T-cell (primary cell): ENCODE measurements at regions of chr12 and their contacts with region 1.

Region 1: GRCh38 chr12:42372154-42372791 is 46.3 kb downstream of the PPHLN1 start:
- DNase-seq: peak in 9 of 35 experiments; percentile 6 to 73 (median 14)
- ATAC-seq: peak; percentile 75 to 89 (median 80)
- H3K4me3 ChIP-seq: no peak overlapping the region
- H3K4me3 Mint-ChIP-seq: no peak overlapping the region
- H3K27ac ChIP-seq: no peak overlapping the region
- H3K27ac Mint-ChIP-seq: no peak overlapping the region
- H3K4me1 ChIP-seq: no peaks in the 10 kb centered on the region
- H3K4me1 Mint-ChIP-seq: peaks cover 6 to 26% (median 13%) of the 10 kb centered on the region in 3 donors
- H3K27me3 ChIP-seq: no peaks in the 10 kb centered on the region
- H3K27me3 Mint-ChIP-seq: no peaks in the 10 kb centered on the region

Region 2: GRCh38 chr12:40946612-40947194 is 1425.6 kb before region 1 on chr12:
- CTCF ChIA-PET with region 1: interaction called, 5 to 21 read pairs
- POLR2A ChIA-PET with region 1: no interaction called
- DNase-seq: peak in 1 of 35 experiments; percentile 42
- ATAC-seq: no peak
- H3K4me3 ChIP-seq: no peak overlapping the region
- H3K4me3 Mint-ChIP-seq: no peak overlapping the region
- H3K27ac ChIP-seq: no peak overlapping the region
- H3K27ac Mint-ChIP-seq: no peak overlapping the region
- H3K4me1 ChIP-seq: no peaks in the 10 kb centered on the region
- H3K4me1 Mint-ChIP-seq: no peaks in the 10 kb centered on the region
- H3K27me3 ChIP-seq: no peaks in the 10 kb centered on the region
- H3K27me3 Mint-ChIP-seq: peaks cover 0 to 3% of the 10 kb centered on the region in 2 donors

Region 3: DNA sequence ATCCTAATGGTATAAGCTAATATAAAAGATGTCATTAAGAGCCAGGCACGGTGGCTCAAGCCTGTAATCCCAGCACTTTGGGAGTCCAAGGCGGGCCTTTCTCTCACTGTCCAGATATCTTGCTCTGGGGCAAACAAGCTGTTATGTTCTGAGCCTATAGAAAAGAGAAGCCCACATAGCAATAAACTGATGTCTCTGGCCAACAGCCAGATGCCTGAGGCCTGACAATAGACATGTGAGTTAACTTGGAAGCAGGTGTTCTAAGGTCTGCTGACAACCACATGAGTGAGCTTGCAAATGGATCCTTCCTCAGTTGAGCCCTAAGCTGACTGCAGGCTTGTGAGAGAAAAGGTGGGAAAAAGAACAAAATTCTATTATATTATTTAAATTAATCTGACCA is 159.2 kb before region 1 on chr12:
- CTCF ChIA-PET with region 1: no interaction called
- POLR2A ChIA-PET with region 1: interaction called in 1 of 2 experiments, 18 read pairs
- DNase-seq: no peak
- ATAC-seq: no peak
- H3K4me3 ChIP-seq: no peak overlapping the region
- H3K4me3 Mint-ChIP-seq: no peak overlapping the region
- H3K27ac ChIP-seq: no peak overlapping the region
- H3K27ac Mint-ChIP-seq: no peak overlapping the region
- H3K4me1 ChIP-seq: no peaks in the 10 kb centered on the region
- H3K4me1 Mint-ChIP-seq: peaks cover 30 to 37% (median 30%) of the 10 kb centered on the region in 3 donors
- H3K27me3 ChIP-seq: no peaks in the 10 kb centered on the region
- H3K27me3 Mint-ChIP-seq: no peaks in the 10 kb centered on the region

Region 4: DNA sequence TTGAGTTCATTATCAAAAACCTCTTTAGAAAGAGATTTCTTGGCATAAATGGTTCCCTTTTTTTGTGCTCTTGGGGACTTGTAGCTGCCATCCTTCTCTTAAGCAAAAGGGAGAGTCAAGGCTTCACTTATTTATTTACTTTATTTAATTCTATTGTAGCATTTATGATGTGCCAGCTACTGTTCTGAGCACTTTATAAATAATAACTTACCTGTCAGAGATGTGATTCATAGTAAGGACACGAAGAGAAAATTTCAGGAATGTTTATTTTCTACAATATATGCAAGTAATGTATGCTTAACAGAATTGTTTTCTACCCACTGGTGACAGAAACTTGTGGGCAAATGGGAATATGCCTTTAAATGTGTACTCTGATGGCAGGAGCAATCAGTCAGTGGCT is 1496.9 kb after region 1 on chr12:
- CTCF ChIA-PET with region 1: no interaction called
- POLR2A ChIA-PET with region 1: interaction called in 1 of 2 experiments, 11 read pairs
- DNase-seq: no peak
- ATAC-seq: no peak
- H3K4me3 ChIP-seq: no peak overlapping the region
- H3K4me3 Mint-ChIP-seq: no peak overlapping the region
- H3K27ac ChIP-seq: no peak overlapping the region
- H3K27ac Mint-ChIP-seq: no peak overlapping the region
- H3K4me1 ChIP-seq: no peaks in the 10 kb centered on the region
- H3K4me1 Mint-ChIP-seq: no peaks in the 10 kb centered on the region
- H3K27me3 ChIP-seq: no peaks in the 10 kb centered on the region
- H3K27me3 Mint-ChIP-seq: no peaks in the 10 kb centered on the region